ENCODE measurements at regions of chr11 and their contacts with region 1.

Region 1: DNA sequence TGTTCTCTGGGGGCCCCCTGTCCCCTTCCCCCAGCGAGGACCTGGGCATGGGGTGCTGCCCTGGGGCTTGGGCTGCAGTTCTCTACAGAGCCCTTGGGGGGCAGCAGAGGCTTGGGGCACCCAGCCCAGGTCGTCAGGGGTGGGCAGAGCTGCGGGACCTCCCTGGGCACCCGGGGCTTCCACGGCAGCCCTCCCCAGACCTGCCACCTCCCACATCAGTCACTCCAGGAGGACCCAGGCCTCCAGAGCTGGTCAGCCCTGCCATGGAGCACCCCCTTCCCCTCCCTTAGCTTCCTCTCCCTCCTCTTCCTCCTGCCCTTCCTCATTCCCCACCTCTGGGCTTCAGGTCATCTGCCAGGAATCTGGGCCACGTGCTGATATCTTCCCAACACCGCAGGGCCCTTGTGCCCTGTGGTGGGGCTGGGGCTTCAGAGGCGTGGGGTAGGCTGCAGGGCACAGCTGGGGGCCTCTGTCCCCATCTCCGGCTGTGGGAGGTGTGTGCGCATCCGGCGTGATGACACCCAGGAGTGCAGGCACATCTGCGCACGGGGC is 5.8 kb downstream of the TSPAN4 start:
- DNase-seq: peak; percentile 60 to 75
- H3K4me3 ChIP-seq: peak overlapping the region in 2 of 4 donors; percentile 52 to 58
- H3K27ac ChIP-seq: no peak overlapping the region
- H3K4me1 ChIP-seq: peaks cover 49 to 83% (median 72%) of the 10 kb centered on the region in 4 donors
- H3K27me3 ChIP-seq: peaks cover 0 to 42% (median 25%) of the 10 kb centered on the region in 3 donors
- CTCF ChIP-seq: peak in 5 of 7 experiments; percentile 69 to 93 (median 90)
- EP300 ChIP-seq: no peak
- POLR2A ChIP-seq: no peak

Region 2: DNA sequence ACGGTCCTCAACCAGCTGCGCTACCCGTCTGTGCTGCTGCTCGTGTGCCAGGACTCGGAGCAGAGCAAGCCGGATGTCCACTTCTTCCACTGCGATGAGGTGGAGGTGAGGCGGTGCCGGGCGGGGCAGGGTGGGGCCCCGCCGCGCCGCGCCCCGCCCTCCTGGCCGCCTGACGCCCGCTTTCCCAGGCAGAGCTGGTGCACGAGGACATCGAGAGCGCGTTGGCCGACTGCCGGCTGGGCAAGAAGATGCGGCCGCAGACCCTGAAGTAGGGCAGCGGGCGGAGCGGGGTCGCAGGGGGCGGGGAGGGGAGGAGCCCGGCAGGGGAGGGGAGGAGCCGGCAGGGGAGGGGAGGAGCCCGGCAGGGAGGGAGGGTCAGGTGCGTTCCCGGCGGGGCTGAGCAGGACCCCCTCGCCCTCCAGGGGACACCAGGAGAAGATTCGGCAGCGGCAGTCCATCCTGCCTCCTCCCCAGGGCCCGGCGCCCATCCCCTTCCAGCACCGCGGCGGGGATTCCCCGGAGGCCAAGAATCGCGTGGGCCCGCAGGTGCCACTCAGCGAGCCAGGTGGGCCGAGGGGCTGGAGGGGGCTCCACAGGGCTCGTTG is 127.7 kb before region 1 on chr11:
- intact Hi-C with region 1: no loop called
- DNase-seq: peak; percentile 59 to 78
- H3K4me3 ChIP-seq: peak overlapping the region in 3 of 4 donors; percentile 27 to 41 (median 33)
- H3K27ac ChIP-seq: peak overlapping the region in 3 of 5 donors; percentile 24 to 52 (median 40)
- H3K4me1 ChIP-seq: peaks cover 24 to 55% (median 35%) of the 10 kb centered on the region in 4 donors
- H3K27me3 ChIP-seq: peaks cover 0 to 67% (median 43%) of the 10 kb centered on the region in 3 donors
- CTCF ChIP-seq: no peak
- EP300 ChIP-seq: no peak
- POLR2A ChIP-seq: no peak

Region 3: GRCh38 chr11:1050581-1051355 is 202.3 kb after region 1 on chr11:
- intact Hi-C with region 1: loop called (anchors 5 kb)
- DNase-seq: peak; percentile 87 to 93
- H3K4me3 ChIP-seq: no peak overlapping the region
- H3K27ac ChIP-seq: no peak overlapping the region
- H3K4me1 ChIP-seq: peaks cover 3 to 44% (median 30%) of the 10 kb centered on the region in 4 donors
- H3K27me3 ChIP-seq: peaks cover 0 to 86% (median 8%) of the 10 kb centered on the region in 3 donors
- CTCF ChIP-seq: peak in 5 of 7 experiments; percentile 78 to 92 (median 87)
- EP300 ChIP-seq: no peak
- POLR2A ChIP-seq: no peak

Measured in stomach (tissue), 19 donors.